Activated B cell treated with CpG ODN at 0.5 μM for 24 hours (primary cell): ENCODE measurements at regions of chr16 and their contacts with region 1.

Region 1: DNA sequence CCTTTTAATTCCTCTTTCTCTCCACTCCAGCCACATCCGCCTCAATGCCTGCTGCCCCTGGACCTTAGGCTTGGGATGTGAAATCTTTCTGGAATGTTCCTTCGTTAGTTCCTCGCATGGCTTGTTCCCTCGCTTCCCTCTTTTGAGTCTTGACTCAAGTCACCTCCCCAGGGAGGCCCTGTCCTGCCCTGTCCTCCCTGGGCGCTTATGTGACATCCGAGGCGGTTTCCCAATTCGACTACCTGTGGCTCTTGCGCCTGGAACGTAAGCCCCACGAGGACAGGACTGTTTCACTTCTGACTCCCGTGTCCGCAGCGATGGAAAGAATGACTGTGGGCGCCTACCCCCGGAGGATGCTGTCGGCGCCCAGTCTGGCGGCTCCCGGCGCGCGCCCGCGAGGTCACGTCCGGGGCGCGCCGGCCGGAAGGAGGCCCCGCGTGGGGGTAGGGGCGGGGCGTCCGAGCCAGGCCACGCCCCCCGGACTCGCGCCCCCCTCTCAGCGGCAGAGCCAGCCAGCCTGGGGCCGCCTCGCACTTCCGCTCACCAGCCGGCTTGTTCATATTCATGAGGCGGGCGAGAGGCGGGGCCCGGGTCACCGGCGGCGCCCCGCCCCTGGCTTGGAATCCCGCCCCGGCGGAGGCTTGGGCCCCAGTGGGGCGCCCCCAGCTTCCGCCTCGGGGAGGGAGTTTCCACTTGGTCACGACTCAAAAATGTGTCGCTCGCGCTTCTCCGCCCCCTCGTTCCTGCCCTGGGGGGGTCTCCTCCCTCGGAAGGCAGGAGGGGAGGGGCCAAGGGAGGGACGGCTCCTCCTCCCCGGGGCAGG is 8.4 kb upstream of the GLIS2 start:
- DNase-seq: peak; percentile 98
- ATAC-seq: peak; percentile 86
- H3K4me3 Mint-ChIP-seq: peak overlapping the region; percentile 91
- H3K27ac Mint-ChIP-seq: peak overlapping the region; percentile 95
- H3K4me1 Mint-ChIP-seq: peaks cover 25% of the 10 kb centered on the region
- H3K27me3 Mint-ChIP-seq: no peaks in the 10 kb centered on the region
- CTCF ChIP-seq: no peak

Region 2: DNA sequence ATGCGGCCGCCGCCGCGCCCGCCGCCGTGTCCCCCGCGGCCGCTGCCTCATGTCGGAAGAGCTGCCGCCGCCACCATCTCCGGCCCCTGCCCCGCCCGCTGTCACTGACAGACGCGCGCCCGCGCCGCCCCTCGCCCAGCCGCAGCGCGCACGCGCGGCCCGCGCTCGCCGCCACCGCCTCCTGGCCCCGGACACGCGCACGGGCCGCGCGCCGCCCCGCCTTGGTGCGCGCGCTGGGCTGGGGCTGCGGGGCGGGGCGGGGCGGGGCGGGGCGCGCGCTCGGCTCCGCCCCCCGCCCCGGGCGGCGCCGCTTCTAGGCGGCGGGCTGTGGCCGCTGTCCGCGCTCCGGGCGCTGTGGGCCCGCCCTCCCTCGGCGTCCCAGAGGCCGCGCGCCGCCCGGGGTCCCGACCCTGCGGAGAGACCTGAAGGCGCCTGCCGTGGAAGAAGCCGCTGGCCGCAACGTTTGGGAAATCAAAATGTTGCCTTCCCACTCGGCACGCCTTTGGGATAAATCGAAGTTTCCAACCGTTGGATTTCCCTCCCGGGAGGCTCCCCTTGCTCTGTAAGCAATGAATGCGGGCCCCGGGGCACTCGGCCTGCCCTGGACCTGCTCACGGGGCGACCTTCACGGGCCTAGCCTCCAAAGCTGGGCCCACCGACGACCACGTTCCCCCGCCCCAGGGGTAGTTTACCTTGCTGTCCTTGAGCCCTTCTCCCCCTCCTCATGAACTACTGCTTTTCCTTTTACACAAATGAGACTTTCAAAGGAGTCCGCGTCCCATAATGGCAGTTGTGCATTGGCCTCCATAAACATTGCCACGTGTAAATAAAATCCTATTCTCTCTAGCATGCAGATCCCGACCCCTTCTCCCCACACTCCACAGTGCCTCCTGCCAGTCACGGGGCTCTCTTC is 190.8 kb before region 1 on chr16 and contains the start of gene ADCY9:
- CTCF ChIA-PET with region 1: no interaction called
- POLR2A ChIA-PET with region 1: no interaction called
- intact Hi-C with region 1: loop called (anchors 5 kb)
- DNase-seq: peak; percentile 73
- ATAC-seq: peak; percentile 84
- H3K4me3 Mint-ChIP-seq: peak within 1 kb of the TSS; percentile 82
- H3K27ac Mint-ChIP-seq: no peak within 1 kb of the TSS
- H3K4me1 Mint-ChIP-seq: peaks cover 8% of the 10 kb centered on the region
- H3K27me3 Mint-ChIP-seq: peaks cover 4% of the 10 kb centered on the region
- CTCF ChIP-seq: no peak
- total RNA-seq, gene ADCY9: 1.3 and 2.0 TPM in 2 replicates

Region 3: GRCh38 chr16:4194661-4195060 is 112.8 kb before region 1 on chr16:
- CTCF ChIA-PET with region 1: no interaction called
- POLR2A ChIA-PET with region 1: no interaction called
- intact Hi-C with region 1: no loop called
- DNase-seq: no peak
- ATAC-seq: no peak
- H3K4me3 Mint-ChIP-seq: no peak overlapping the region
- H3K27ac Mint-ChIP-seq: no peak overlapping the region
- H3K4me1 Mint-ChIP-seq: no peaks in the 10 kb centered on the region
- H3K27me3 Mint-ChIP-seq: peaks cover 2% of the 10 kb centered on the region
- CTCF ChIP-seq: no peak

Region 4: GRCh38 chr16:4288148-4288921 is 19.1 kb before region 1 on chr16:
- CTCF ChIA-PET with region 1: interaction called, 7 read pairs
- POLR2A ChIA-PET with region 1: no interaction called
- intact Hi-C with region 1: loop called (anchors 2 kb)
- DNase-seq: peak; percentile 78
- ATAC-seq: peak; percentile 95
- H3K4me3 Mint-ChIP-seq: no peak overlapping the region
- H3K27ac Mint-ChIP-seq: no peak overlapping the region
- H3K4me1 Mint-ChIP-seq: peaks cover 9% of the 10 kb centered on the region
- H3K27me3 Mint-ChIP-seq: peaks cover 15% of the 10 kb centered on the region
- CTCF ChIP-seq: peak; percentile 79

Region 5: DNA sequence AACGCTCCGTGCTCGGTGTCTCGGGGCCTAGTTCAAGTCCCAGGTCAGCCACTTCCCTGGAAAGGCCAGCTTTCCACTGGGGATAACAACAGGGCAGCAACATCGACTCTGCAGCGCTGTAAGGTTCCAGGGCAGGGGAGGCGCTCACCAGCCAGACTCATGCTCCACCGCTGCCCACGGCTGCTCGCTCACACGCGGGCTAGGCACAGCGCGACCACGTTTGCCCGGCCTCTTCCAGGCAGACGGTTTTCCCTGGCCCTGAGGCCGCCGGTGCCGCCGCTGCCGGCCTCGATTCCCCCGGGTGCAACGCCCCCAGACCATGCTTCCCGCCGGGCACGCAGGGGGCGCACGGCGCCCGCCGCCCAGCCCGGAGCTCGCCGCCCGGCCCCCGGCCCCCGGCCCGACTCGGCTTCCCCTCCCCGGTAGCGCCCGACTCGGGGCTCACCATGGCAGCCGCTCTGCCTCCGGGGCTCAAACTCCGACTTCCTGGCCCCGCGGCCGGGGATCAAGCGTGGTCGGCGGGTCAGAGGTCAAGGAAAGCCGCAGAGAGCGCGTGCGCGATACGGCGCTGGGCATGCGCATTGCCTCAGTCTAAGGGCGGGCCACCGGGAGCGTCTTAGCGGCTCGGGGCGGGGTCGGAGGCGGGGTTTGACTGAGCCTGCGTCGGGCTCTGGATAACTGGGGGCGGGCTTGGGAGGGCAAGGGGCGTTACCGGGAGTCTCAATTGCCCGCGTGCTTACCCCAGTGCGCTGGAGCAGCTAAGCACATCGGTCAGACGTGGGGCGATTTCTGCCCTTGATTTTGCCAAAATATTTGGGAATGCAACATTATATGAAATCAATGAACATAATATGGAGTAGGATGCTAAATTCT is 43.6 kb after region 1 on chr16 and contains the start of gene PAM16:
- CTCF ChIA-PET with region 1: no interaction called
- POLR2A ChIA-PET with region 1: interaction called, 11 read pairs
- intact Hi-C with region 1: loop called (anchors 2 kb)
- DNase-seq: peak; percentile 99
- ATAC-seq: peak; percentile 93
- H3K4me3 Mint-ChIP-seq: peak within 1 kb of the TSS; percentile 91
- H3K27ac Mint-ChIP-seq: peak within 1 kb of the TSS; percentile 77
- H3K4me1 Mint-ChIP-seq: peaks cover 16% of the 10 kb centered on the region
- H3K27me3 Mint-ChIP-seq: no peaks in the 10 kb centered on the region
- CTCF ChIP-seq: no peak
- total RNA-seq, gene PAM16: 42.4 and 58.1 TPM in 2 replicates

Region 6: GRCh38 chr16:4957720-4958509 is 650.5 kb after region 1 on chr16 and contains the start of gene SEC14L5:
- CTCF ChIA-PET with region 1: no interaction called
- POLR2A ChIA-PET with region 1: no interaction called
- intact Hi-C with region 1: loop called (anchors 5 kb)
- DNase-seq: peak; percentile 63
- ATAC-seq: peak; percentile 95
- H3K4me3 Mint-ChIP-seq: peak within 1 kb of the TSS; percentile 75
- H3K27ac Mint-ChIP-seq: no peak within 1 kb of the TSS
- H3K4me1 Mint-ChIP-seq: peaks cover 13% of the 10 kb centered on the region
- H3K27me3 Mint-ChIP-seq: peaks cover 54% of the 10 kb centered on the region
- CTCF ChIP-seq: no peak
- total RNA-seq, gene SEC14L5: not detected in 2 replicates